ENCODE measurements at regions of chr11 and their contacts with region 1.

Region 1: GRCh38 chr11:75562048-75562835 is at the start of gene SERPINH1:
- DNase-seq: peak; percentile 78
- ATAC-seq: peak; percentile 58
- H3K4me3 Mint-ChIP-seq: peak within 1 kb of the TSS; percentile 96
- H3K27ac Mint-ChIP-seq: peak within 1 kb of the TSS; percentile 99
- H3K4me1 Mint-ChIP-seq: peaks cover 74% of the 10 kb centered on the region
- H3K27me3 Mint-ChIP-seq: no peaks in the 10 kb centered on the region
- CTCF ChIP-seq: no peak
- total RNA-seq, gene SERPINH1: 411 to 478 TPM (median 473 TPM) in 3 replicates

Region 2: DNA sequence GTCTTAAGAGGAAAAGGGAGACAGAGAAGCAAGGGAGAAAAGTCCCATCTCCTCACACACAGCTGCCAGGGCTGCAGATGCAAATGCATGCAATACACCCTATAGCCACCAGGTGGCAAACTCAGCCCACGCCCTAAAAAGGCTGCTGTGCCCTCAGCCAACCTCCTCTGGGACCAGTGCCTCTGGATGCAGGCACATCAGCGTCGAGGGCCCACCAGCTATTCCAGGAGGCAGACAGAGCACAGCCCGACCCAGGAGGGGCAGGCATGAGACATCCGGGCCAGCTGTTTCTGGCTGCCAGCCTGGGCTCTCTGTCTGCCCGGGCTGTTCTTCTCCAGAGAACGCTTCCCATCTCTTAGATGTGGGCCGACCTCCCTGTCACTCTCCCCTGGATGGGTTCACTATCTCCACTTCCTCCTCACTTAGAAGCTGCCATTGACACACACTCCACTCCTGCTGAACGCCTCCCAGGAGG is 282.0 kb before region 1 on chr11:
- CTCF ChIA-PET with region 1: no interaction called
- POLR2A ChIA-PET with region 1: no interaction called
- DNase-seq: peak; percentile 88
- ATAC-seq: peak; percentile 94
- H3K4me3 Mint-ChIP-seq: no peak overlapping the region
- H3K27ac Mint-ChIP-seq: peak overlapping the region; percentile 82
- H3K4me1 Mint-ChIP-seq: peaks cover 36% of the 10 kb centered on the region
- H3K27me3 Mint-ChIP-seq: no peaks in the 10 kb centered on the region
- CTCF ChIP-seq: peak; percentile 94

Region 3: GRCh38 chr11:75547580-75548058 is 14.6 kb before region 1 on chr11:
- CTCF ChIA-PET with region 1: interaction called, 69 read pairs
- POLR2A ChIA-PET with region 1: interaction called, 6 read pairs
- DNase-seq: peak; percentile 84
- ATAC-seq: peak; percentile 92
- H3K4me3 Mint-ChIP-seq: no peak overlapping the region
- H3K27ac Mint-ChIP-seq: peak overlapping the region; percentile 85; the same call in 1 of the 2 replicates
- H3K4me1 Mint-ChIP-seq: peaks cover 9% of the 10 kb centered on the region
- H3K27me3 Mint-ChIP-seq: peaks cover 6% of the 10 kb centered on the region; the same call in 1 of the 2 replicates
- CTCF ChIP-seq: peak; percentile 68

Region 4: DNA sequence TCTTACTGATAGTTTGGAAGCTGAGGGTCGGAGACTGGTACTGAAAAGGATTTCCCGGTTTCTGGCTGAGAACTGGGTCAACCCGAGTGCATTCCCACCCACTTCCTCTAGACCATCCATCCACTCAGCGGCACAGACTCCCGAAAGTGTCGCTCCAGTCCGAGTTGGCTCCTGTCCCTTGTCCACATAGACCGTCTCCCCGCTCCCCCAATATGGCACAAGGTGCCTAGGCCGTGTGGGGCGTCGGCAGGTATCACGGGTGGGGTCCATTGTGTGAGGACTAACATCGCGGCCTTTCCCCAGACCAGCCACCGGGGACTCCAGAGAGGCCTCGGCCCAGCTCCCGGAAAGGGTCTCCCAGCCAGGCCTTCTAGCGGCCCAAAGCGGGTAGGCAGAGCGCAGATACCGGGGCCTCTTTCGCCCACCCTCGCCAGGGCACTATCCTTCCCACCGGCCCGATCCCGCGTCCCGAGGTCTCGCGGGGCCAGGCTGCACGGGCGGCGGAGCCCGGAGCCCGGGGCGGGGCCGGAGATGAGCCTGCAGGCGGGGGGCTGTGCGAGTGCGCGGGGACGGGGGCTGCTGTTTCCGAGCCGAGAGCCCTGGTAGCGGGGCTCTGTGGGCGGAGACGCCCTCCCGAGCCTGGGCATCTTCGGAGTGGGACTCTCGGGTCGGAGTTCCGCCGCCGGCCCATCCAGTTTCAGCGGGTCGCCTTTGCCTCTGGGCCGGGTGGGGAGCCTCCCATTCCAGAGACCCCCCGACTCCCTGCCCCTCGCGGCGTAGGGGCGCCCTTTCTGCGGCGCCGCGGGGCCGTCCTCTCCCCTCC is 20.9 kb after region 1 on chr11:
- CTCF ChIA-PET with region 1: interaction called, 34 read pairs
- POLR2A ChIA-PET with region 1: interaction called, 18 read pairs
- DNase-seq: peak; percentile 77
- ATAC-seq: peak; percentile 72
- H3K4me3 Mint-ChIP-seq: peak overlapping the region; percentile 75
- H3K27ac Mint-ChIP-seq: peak overlapping the region; percentile 72
- H3K4me1 Mint-ChIP-seq: peaks cover 30% of the 10 kb centered on the region
- H3K27me3 Mint-ChIP-seq: peaks cover 16% of the 10 kb centered on the region
- CTCF ChIP-seq: no peak

Region 5: DNA sequence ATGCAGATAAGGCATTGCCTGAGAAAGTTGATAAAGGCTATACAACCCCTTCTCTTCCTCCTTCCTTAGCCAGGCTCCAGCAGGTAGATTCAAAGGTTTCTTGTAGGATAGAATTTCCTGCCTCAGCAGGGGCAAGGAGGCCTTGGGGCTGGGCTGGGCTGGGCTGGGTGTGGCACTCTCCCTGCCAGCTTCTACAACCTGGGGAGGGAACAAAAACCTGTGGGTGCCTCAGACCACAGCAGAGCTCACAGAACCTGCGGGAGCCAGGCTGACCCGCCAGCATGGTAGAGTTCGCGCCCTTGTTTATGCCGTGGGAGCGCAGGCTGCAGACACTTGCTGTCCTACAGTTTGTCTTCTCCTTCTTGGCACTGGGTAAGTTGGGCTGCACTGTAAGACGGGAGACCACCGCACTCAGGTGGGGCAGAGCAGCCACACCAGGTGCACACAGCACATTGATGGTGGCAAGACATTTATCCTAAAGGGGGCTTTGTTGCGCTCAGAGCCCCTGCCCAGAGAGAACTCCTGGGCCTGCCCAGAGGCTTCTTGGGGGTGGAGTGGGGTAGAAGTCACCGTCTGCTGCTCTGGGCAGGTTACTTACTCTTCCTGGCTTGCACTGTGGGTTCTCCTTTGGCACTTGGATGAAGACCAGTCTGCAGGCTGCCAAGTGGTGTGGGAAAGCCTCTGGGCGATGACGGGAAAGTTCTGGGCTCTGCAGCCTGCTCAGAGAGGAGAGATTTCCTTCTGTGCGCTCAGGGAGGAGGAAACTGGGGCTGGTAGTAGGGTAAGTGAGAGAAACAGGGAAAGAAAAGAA is 155.6 kb after region 1 on chr11 and contains the start of gene MOGAT2:
- CTCF ChIA-PET with region 1: no interaction called
- POLR2A ChIA-PET with region 1: no interaction called
- DNase-seq: no peak
- ATAC-seq: no peak
- H3K4me3 Mint-ChIP-seq: no peak within 1 kb of the TSS
- H3K27ac Mint-ChIP-seq: no peak within 1 kb of the TSS
- H3K4me1 Mint-ChIP-seq: peaks cover 11% of the 10 kb centered on the region
- H3K27me3 Mint-ChIP-seq: peaks cover 56% of the 10 kb centered on the region
- CTCF ChIP-seq: no peak
- total RNA-seq, gene MOGAT2: 0.09 to 0.11 TPM in 2 of 3 replicates, not detected in the other